ENCODE measurements at regions of chr3 and their contacts with region 1.

Region 1: DNA sequence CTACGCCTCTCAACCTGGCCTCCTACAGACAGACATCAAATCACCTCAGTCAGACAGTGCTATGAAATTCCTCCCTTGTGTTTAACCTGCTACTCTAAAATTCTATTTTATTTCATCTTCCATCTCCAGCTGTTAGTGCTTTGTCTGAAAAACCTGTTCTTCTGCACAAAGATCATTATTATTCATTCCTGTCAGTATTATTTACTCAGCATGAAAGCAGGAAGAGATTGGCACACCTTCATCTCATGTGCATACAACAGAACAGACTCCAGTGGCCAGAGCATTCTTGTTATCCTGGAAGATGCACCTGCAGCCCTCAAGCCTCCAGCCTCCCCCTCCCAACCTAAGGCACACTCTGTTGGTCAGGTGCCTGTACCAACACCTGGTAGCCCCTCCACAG is 1.8 kb upstream of the ROPN1B start:
- DNase-seq: no peak
- ATAC-seq: no peak

Region 2: DNA sequence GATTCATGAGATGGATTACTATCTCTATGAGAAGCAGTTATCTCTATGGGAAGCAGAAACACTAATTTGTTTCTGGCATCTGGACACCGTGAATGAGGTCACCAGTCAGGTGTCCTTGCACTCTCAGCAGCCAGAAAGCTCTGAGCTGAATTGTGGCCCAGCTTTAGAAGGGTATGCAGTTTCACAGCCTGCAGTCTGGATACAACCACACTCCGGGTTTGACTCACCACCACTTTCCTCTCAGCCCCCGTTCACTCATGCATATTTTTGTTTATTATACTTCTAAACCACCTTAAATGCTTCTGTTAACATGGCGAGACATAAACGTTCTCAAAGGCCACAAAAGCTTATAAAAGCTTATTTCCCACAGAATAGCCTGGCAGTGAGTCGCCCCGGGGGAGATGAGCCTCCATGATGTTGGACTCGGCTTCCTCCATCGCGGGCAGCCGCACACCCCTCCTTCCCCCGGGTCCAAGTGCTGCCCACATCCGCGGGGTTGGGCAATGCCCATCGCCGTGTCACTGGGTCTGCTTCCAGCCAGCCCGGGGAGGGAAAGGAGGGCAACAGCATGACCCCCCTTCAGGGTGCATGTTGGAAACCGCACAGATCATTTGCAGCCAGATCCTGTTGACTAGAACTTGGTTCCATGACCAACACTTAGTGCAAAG is 133.6 kb after region 1 on chr3:
- intact Hi-C with region 1: loop called (anchors 5 kb)
- DNase-seq: no peak
- ATAC-seq: no peak